B cell (primary cell): ENCODE measurements at regions of chr10 and their contacts with region 1.

Region 1: DNA sequence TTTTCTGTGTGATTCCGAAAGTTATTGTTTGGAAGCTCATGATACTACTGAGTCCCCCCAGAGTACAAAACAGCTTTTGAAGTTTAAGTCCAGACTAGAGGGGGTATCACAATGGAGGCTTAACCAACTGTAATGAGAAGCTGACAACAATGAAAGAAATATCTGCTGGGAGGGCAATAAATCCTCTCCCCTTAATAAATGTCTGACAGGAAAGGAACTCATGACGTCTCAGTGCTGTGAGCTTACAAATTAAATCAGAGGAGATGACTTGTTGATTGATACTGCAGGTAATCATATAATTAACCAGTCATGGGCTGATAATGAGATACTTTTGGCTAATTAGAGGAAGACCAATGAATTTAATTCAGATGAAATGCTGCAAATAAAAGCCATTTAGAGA is 102.6 kb upstream of the WDR11 start:
- DNase-seq: no peak
- ATAC-seq: no peak
- H3K4me3 ChIP-seq: no peak overlapping the region
- H3K4me3 Mint-ChIP-seq: no peak overlapping the region
- H3K27ac ChIP-seq: no peak overlapping the region
- H3K27ac Mint-ChIP-seq: no peak overlapping the region
- H3K4me1 ChIP-seq: peaks cover 4 to 5% of the 10 kb centered on the region in 2 donors
- H3K4me1 Mint-ChIP-seq: peaks cover 6% of the 10 kb centered on the region
- H3K27me3 ChIP-seq: no peaks in the 10 kb centered on the region
- H3K27me3 Mint-ChIP-seq: peaks cover 24% of the 10 kb centered on the region
- CTCF ChIP-seq: no peak

Region 2: DNA sequence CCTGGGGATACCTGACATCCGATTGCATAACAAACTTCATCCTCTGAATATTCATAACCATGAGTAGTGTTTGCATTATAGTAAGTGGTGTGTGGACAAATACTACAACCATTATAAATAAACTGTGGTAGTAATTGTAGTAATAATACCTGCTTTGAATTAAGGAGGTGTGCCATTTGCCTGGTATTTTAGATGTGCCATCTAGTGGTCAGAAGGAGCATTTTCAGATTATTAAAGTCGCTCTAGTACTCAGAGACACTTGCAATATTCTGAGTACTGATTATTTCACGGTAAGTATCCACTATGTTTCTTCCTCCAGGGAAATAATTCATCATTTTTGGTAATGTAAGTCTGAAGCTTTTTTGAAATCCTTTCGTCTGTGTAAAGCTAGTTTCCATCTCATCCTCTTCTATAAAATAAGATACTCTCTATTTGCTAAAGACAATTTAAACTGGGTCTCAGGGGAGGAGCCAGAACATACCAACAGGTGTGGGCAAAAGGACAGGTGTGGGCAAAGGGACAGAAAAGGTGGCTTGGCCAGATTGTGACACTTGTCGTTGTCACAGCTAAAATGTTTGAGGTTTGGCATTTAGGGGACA is 12.6 kb before region 1 on chr10:
- CTCF ChIA-PET with region 1: interaction called, 11 read pairs
- POLR2A ChIA-PET with region 1: no interaction called
- intact Hi-C with region 1: no loop called
- DNase-seq: peak; percentile 18
- ATAC-seq: no peak
- H3K4me3 ChIP-seq: no peak overlapping the region
- H3K4me3 Mint-ChIP-seq: no peak overlapping the region
- H3K27ac ChIP-seq: no peak overlapping the region
- H3K27ac Mint-ChIP-seq: no peak overlapping the region
- H3K4me1 ChIP-seq: no peaks in the 10 kb centered on the region
- H3K4me1 Mint-ChIP-seq: no peaks in the 10 kb centered on the region
- H3K27me3 ChIP-seq: no peaks in the 10 kb centered on the region
- H3K27me3 Mint-ChIP-seq: peaks cover 12% of the 10 kb centered on the region
- CTCF ChIP-seq: peak; percentile 76